ENCODE measurements at regions of chr10 and their contacts with region 1.

Region 1: GRCh38 chr10:14185316-14186045 is 145.2 kb downstream of the FRMD4A start:
- DNase-seq: peak; percentile 73
- ATAC-seq: peak; percentile 92
- H3K4me3 Mint-ChIP-seq: peak overlapping the region; percentile 63
- H3K27ac Mint-ChIP-seq: peak overlapping the region; percentile 97
- H3K4me1 Mint-ChIP-seq: peaks cover 31% of the 10 kb centered on the region
- H3K27me3 Mint-ChIP-seq: peaks cover 29% of the 10 kb centered on the region

Region 2: GRCh38 chr10:13787015-13787421 is 398.5 kb before region 1 on chr10:
- CTCF ChIA-PET with region 1: interaction called, 4 read pairs
- POLR2A ChIA-PET with region 1: interaction called, 48 read pairs
- intact Hi-C with region 1: loop called (anchors 1 kb)
- DNase-seq: peak; percentile 87
- ATAC-seq: peak; percentile 87
- H3K4me3 Mint-ChIP-seq: peak overlapping the region; percentile 32
- H3K27ac Mint-ChIP-seq: peak overlapping the region; percentile 90
- H3K4me1 Mint-ChIP-seq: peaks cover 22% of the 10 kb centered on the region
- H3K27me3 Mint-ChIP-seq: no peaks in the 10 kb centered on the region

Region 3: DNA sequence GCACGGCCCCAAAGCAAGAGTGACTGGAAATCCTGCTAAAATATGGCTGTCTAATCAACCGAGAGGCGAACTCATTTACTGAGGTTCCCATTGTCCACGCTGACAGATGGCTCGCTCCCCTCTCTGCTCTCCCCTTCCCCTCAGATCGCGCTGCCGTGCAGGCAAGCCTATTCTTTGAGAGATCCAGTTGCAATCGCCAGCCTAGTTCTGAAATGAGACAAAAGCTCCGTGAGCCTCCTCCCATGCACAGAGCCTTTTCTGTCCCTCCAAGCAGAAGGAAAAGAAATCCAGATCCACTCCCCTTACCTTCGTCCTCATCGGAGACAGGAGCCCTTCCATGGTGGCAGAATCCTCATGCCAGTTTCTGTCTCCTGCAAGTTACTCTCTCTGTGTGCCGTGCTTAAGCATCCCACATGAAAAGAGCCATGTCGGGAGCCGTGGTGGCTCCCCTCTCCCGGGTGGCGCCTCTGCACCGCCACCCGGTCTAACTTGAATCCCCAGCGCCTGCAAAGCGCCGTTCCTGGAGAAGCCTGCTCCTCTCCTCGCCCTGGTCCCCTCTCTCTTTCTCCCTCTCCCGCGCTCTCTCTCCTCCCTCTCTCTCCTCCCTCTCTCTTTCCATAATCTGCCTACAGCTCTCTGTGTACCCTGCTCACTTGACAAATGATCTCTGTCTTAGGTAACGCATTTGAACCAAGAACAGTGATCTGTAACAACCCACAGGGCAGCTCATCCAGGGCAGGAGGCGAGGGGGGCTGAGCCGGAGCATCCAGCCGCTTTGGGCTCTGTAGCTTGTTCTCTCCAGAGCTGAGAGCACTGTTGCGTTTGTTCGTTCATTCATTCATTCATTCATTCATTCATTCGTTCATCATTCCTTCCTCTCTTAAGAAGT is 11.5 kb before region 1 on chr10:
- CTCF ChIA-PET with region 1: no interaction called
- POLR2A ChIA-PET with region 1: interaction called, 23 read pairs
- intact Hi-C with region 1: no loop called
- DNase-seq: peak; percentile 17
- ATAC-seq: peak; percentile 47
- H3K4me3 Mint-ChIP-seq: peak overlapping the region; percentile 65
- H3K27ac Mint-ChIP-seq: no peak overlapping the region
- H3K4me1 Mint-ChIP-seq: peaks cover 15% of the 10 kb centered on the region
- H3K27me3 Mint-ChIP-seq: peaks cover 67% of the 10 kb centered on the region

Region 4: GRCh38 chr10:14409856-14410458 is 224.5 kb after region 1 on chr10:
- CTCF ChIA-PET with region 1: no interaction called
- POLR2A ChIA-PET with region 1: interaction called, 20 read pairs
- intact Hi-C with region 1: no loop called
- DNase-seq: no peak
- ATAC-seq: no peak
- H3K4me3 Mint-ChIP-seq: no peak overlapping the region
- H3K27ac Mint-ChIP-seq: peak overlapping the region; percentile 81
- H3K4me1 Mint-ChIP-seq: peaks cover 22% of the 10 kb centered on the region
- H3K27me3 Mint-ChIP-seq: peaks cover 47% of the 10 kb centered on the region

Region 5: DNA sequence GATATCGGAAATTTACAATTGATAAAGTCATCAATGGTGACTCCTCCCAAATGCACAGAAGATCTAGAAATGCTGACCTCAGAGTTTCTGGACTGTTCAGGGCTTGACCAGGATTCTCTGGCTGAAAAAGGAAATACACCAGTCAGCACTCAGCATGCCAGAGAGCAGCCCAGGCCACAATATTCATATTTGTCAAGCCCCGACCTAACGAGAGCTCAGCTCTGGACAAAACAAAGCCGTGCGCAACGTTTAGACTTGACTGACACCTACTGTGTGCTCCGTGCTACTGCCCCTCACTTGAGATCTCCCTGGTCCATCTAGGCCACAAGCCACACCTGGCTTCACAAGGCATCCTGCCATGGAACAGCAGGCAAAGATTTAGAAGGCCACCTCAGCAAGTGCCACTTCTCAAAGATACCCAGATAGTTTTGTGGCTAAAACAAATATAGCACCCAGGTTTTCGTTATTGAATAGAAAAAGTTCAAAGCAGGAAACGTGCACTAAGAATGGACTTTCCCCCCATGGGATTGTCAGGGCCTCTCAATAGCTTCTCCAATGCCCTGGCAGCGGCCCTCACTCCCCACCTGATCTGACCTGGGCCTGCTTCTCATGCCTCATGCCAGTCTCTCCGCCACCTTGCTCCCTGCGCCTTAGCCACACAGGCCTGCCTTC is 370.9 kb after region 1 on chr10:
- CTCF ChIA-PET with region 1: interaction called, 3 read pairs
- POLR2A ChIA-PET with region 1: interaction called, 15 read pairs
- intact Hi-C with region 1: no loop called
- DNase-seq: peak; percentile 48
- ATAC-seq: peak; percentile 37
- H3K4me3 Mint-ChIP-seq: peak overlapping the region; percentile 17
- H3K27ac Mint-ChIP-seq: peak overlapping the region; percentile 86
- H3K4me1 Mint-ChIP-seq: peaks cover 93% of the 10 kb centered on the region
- H3K27me3 Mint-ChIP-seq: no peaks in the 10 kb centered on the region

Region 6: DNA sequence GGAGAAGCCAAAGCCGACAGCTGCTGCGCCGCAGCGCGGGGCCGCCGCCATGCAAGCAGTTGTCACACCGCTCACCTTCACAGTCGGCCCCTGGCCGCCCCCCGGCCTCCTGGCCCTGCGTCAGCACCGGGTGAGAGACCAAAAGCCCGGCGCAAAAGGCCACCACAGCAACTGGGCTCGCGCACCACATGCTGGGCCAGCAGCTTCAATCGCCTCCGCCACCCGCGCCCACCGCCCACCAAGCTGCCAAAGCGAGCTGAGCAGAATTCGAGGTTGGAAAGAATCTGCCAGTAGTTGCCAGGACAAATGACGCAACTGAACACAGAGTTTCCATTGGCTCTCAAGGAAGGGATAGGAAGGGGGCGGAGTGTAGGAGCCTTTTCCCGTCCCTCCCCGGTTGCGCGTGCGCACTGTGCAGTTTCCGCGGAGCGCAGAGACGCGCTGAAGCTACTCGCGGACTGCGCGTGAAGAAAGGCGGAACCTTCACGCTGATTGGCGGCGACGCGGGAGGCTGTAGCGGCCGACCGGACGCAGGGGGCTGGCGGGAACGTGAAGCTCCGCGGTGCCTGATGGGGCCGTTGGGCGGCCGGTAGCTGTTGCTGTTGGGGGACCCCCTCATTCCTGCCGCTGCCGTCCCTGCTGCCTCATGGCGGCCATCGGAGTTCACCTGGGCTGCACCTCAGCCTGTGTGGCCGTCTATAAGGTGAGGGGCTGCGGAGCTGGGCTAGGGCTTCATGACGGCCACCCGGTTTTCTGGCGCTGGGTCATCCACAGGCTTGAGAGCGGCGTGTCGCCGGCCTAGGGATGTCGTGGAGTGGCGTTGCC is 652.5 kb after region 1 on chr10 and contains the starts of genes CDNF, HSPA14 and MSANTD7:
- CTCF ChIA-PET with region 1: no interaction called
- POLR2A ChIA-PET with region 1: interaction called, 29 read pairs
- intact Hi-C with region 1: loop called (anchors 1 to 10 kb)
- DNase-seq: peak; percentile 100
- ATAC-seq: peak; percentile 97
- H3K4me3 Mint-ChIP-seq: peak within 1 kb of the TSS; percentile 89
- H3K27ac Mint-ChIP-seq: peak within 1 kb of the TSS; percentile 94
- H3K4me1 Mint-ChIP-seq: peaks cover 18% of the 10 kb centered on the region
- H3K27me3 Mint-ChIP-seq: no peaks in the 10 kb centered on the region
- total RNA-seq, gene CDNF: 2.5 to 2.7 TPM
- total RNA-seq, gene HSPA14: 26.1 to 36.0 TPM
- total RNA-seq, gene MSANTD7: 19.2 to 22.9 TPM

Region 7: DNA sequence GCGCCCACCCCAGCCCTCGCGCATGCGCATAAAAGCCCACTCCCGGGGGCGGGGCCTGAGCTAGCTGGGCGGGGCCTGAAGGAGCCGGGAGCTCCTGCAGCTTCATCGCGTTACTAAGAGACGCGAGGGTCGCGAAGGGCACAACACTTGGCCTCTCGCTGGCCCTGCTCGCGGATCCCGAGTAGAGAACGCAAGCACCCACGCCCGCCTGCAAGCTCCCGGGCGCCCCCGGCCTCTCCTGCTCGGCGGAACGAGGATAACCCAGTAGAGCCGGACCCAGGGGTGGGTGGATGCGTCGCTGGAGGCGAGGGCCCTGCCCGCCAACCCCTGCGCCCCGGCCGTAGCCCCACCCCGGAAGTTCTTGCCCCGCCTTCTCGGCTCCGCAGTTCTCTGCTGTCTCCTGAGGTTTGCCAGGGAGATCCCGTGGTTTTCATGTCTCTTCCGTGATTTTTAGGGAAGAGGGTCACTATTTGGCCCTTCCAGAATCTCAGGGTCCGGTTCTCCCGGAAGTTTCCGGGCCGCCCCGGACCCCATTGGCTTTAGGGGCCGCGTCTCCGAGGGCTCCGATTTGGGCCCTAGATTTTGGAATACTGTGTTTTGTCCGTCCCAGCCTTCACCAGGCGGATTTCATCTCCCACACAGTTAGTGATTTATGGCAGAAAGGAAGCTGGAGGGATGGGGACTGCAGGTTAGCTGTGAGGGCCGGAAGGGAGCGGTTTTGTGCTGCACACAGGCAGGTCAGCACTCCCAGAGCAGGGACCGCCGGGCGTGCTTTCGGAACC is 774.0 kb after region 1 on chr10 and contains the start of gene MEIG1:
- CTCF ChIA-PET with region 1: no interaction called
- POLR2A ChIA-PET with region 1: interaction called, 12 read pairs
- intact Hi-C with region 1: loop called in 1 of 2 experiments (anchors 10 kb)
- DNase-seq: peak; percentile 96
- ATAC-seq: peak; percentile 87
- H3K4me3 Mint-ChIP-seq: peak within 1 kb of the TSS; percentile 97
- H3K27ac Mint-ChIP-seq: peak within 1 kb of the TSS; percentile 98
- H3K4me1 Mint-ChIP-seq: peaks cover 26% of the 10 kb centered on the region
- H3K27me3 Mint-ChIP-seq: no peaks in the 10 kb centered on the region
- total RNA-seq, gene MEIG1: 0.81 to 1.1 TPM

Measured in activated CD4-positive, alpha-beta T cell treated with anti-CD3 and anti-CD28 coated beads for 36 hours (primary cell).